ENCODE measurements at regions of chr9 and their contacts with region 1.

Region 1: DNA sequence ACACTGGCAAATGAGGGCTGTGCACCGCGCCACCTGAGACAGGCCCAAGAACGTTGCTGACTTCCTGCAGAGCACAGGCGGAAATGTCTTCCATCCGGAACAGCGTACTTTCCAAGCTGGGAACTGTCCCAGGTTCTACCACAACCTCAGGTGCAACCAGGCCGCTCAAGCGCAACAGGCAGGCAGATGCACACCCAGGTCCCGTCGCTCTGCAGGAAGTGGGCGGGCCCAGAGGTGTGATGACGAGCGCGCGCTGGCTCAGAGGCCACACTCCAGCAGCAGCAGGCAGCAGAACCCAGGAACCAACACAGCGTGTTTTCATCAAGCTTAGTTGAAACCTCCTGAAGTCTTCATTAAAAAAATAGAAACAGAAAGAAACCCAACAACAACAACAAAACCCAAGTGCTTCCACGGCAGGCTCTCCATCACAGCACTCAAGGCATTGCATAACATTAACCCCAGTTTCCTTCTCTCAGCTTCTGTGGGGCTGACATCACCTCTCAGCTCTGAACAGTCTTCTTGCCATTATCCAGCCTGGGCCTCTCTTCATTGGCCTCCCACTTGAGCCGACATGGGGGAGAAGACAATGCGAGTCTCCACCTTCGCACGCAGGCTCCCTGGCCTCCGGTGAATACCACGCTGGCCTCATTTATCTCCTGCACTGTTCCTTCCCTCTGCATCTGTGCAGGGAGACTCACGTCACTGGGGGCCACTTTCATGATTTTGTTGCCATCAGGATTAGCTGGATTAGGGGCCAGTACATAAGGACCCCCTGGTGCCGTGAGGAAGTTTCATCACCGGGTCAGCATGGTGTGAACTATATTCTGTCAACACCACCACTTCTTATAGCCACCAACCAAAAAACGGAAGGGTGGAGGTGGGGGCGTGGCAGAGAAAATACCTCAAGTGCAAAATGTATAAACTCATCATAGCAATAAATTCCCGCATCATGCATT is 22.1 kb downstream of the PTCH1 start:
- DNase-seq: peak; percentile 75 to 94 (median 84)
- ATAC-seq: peak; percentile 94
- H3K4me3 ChIP-seq: peak overlapping the region; percentile 41
- H3K4me3 Mint-ChIP-seq: peak overlapping the region; percentile 88
- H3K27ac ChIP-seq: peak overlapping the region; percentile 49 to 65
- H3K27ac Mint-ChIP-seq: peak overlapping the region; percentile 98
- H3K4me1 ChIP-seq: peaks cover 59% of the 10 kb centered on the region
- H3K4me1 Mint-ChIP-seq: peaks cover 78% of the 10 kb centered on the region
- H3K27me3 ChIP-seq: peaks cover 0 to 4% of the 10 kb centered on the region in 2 experiments
- H3K27me3 Mint-ChIP-seq: peaks cover 7% of the 10 kb centered on the region
- CTCF ChIP-seq: no peak

Region 2: GRCh38 chr9:95462249-95463147 is 32.2 kb before region 1 on chr9:
- CTCF ChIA-PET with region 1: no interaction called
- POLR2A ChIA-PET with region 1: interaction called, 29 read pairs
- intact Hi-C with region 1: loop called in 1 of 2 experiments (anchors 2 kb)
- DNase-seq: peak; percentile 56 to 94 (median 66)
- ATAC-seq: peak; percentile 94
- H3K4me3 ChIP-seq: peak overlapping the region; percentile 41
- H3K4me3 Mint-ChIP-seq: peak overlapping the region; percentile 89
- H3K27ac ChIP-seq: no peak overlapping the region
- H3K27ac Mint-ChIP-seq: peak overlapping the region; percentile 57
- H3K4me1 ChIP-seq: peaks cover 28% of the 10 kb centered on the region
- H3K4me1 Mint-ChIP-seq: peaks cover 47% of the 10 kb centered on the region
- H3K27me3 ChIP-seq: no peaks in the 10 kb centered on the region
- H3K27me3 Mint-ChIP-seq: no peaks in the 10 kb centered on the region
- CTCF ChIP-seq: no peak

Region 3: GRCh38 chr9:95726756-95727155 is 232.1 kb after region 1 on chr9:
- CTCF ChIA-PET with region 1: no interaction called
- POLR2A ChIA-PET with region 1: interaction called, 3 read pairs
- intact Hi-C with region 1: loop called in 1 of 2 experiments (anchors 2 kb)
- DNase-seq: peak in 3 of 14 experiments; percentile 42 to 54 (median 43)
- ATAC-seq: no peak
- H3K4me3 ChIP-seq: no peak overlapping the region
- H3K4me3 Mint-ChIP-seq: no peak overlapping the region
- H3K27ac ChIP-seq: no peak overlapping the region
- H3K27ac Mint-ChIP-seq: no peak overlapping the region
- H3K4me1 ChIP-seq: peaks cover 26% of the 10 kb centered on the region
- H3K4me1 Mint-ChIP-seq: peaks cover 47% of the 10 kb centered on the region
- H3K27me3 ChIP-seq: no peaks in the 10 kb centered on the region
- H3K27me3 Mint-ChIP-seq: no peaks in the 10 kb centered on the region
- CTCF ChIP-seq: no peak

Region 4: DNA sequence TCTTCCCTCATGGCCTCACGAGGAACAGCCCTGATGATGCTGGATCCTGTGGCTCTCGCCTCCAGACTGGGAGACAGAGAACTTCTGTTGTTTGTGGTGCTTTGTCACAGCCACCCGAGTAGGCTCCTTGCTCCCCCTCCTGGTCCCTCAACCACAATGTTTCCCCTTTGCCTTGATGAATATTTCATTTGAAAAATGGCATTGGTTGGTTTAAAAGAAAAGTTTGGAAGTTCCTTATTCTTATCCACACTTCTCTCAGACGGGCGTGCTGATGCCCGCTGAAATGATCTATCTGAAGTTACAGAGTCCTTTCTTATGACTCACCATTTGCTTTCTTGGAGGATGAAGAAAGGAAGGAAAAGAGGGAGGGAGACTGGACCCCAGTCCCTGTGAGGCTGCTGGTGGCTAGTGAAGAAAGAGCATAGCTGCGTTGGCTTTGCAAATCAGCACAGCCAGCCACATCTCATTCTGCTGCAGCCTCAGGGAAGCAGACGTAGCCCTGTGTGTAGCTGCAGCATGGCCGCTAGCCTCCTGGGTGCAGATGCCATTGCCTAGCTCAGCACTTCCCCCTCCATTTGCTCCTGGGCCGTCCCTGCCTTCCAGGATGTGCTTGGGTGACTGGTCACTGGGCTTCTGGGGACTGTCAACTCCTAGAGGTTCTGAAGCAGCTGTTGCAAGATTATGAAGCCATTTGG is 566.7 kb after region 1 on chr9:
- CTCF ChIA-PET with region 1: no interaction called
- POLR2A ChIA-PET with region 1: no interaction called
- intact Hi-C with region 1: loop called in 1 of 2 experiments (anchors 1 kb)
- DNase-seq: peak; percentile 21 to 72 (median 45)
- ATAC-seq: peak; percentile 65
- H3K4me3 ChIP-seq: no peak overlapping the region
- H3K4me3 Mint-ChIP-seq: no peak overlapping the region
- H3K27ac ChIP-seq: no peak overlapping the region
- H3K27ac Mint-ChIP-seq: no peak overlapping the region
- H3K4me1 ChIP-seq: peaks cover 12% of the 10 kb centered on the region
- H3K4me1 Mint-ChIP-seq: no peaks in the 10 kb centered on the region
- H3K27me3 ChIP-seq: no peaks in the 10 kb centered on the region
- H3K27me3 Mint-ChIP-seq: no peaks in the 10 kb centered on the region
- CTCF ChIP-seq: peak; percentile 43

Measured in CD4-positive, alpha-beta T cell (primary cell).